ENCODE measurements at regions of chr11 and their contacts with region 1.

Region 1: GRCh38 chr11:61384271-61385242 is 7.8 kb upstream of the TMEM216 start:
- DNase-seq: no peak
- H3K4me3 ChIP-seq: no peak overlapping the region
- H3K27ac ChIP-seq: no peak overlapping the region
- H3K27me3 ChIP-seq: no peaks in the 10 kb centered on the region
- CTCF ChIP-seq: peak; percentile 40

Region 2: DNA sequence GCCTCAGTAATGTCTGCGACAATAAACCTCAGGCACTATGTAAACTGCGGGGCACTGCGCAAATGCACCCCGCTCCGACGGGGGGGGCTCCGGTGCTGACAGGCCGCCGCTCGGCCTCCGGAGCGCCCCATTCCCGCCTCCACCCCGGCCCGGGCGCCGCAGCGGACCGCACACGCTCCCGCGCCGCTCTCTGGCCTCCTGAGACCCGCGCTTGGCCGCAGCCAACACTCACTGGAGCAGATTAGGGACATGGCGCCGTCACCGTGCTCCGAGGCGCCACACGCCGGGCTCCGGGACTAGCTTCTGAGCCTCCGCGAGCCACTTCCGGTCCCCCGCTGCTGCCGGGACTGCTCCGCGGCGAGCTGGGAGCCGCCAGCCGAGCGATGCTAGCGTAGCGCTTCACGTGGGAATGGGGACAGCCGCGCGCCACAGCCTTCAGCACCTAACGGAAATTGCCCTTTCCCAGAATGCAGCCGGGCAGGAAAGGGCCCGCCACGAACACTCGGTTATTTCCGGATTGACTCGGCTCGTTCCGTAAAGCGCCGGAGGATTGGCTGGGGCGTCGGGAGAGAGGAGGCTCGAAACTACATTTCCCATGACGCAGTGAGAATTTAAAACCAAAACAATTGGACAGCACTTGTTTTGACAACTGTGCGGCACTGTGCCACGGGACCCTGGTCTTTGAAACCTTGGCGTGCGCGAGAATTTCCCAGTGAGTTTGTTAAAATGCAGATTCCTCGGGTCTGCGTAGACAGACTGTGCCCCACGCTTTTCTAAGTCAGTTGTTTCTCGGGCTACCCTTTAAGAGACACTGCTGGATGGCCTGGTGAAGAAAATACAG is 478.2 kb before region 1 on chr11 and contains the start of gene PRPF19:
- CTCF ChIA-PET with region 1: no interaction called
- POLR2A ChIA-PET with region 1: interaction called, 13 read pairs
- DNase-seq: peak; percentile 81
- H3K4me3 ChIP-seq: peak within 1 kb of the TSS; percentile 91
- H3K27ac ChIP-seq: peak within 1 kb of the TSS; percentile 85
- H3K27me3 ChIP-seq: peaks cover 5% of the 10 kb centered on the region
- CTCF ChIP-seq: no peak
- polyA plus RNA-seq, gene PRPF19: 25.1 and 33.6 TPM in 2 replicates

Region 3: DNA sequence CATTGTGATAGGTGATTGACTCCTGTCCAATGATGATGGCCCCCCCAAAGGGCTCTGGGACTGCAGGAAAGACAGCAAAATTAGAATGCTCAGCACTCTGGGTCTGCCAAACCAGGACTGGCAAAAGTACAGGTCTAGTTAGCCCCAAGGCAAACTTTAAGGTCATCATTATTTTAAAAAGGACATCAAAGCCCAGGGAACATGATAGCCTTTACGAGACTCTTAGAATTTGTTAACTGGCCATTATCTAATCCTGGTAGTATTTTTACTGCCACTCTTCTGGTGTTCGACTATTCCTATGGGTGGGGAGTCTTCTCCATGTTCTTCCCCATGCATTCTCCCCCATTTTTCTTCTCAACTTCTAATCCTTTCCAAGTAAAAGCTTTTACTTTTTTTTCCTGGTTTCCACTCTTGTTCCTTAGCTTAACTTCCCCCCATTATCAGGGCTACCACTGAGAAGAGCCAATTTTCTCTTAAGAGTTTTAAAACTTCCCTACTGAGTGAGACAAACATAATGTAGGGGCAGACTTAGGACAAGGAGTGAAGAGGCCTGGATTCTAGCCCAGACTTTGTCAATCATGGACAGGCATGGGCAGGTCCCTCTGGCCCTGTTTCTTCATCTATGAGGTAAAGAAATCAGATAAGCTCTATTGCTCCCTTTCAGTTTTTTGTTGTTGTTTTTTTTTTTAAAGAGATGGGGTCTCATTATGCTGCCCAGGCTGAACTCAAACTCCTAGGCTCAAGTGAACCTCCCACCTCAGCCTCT is 58.7 kb before region 1 on chr11:
- CTCF ChIA-PET with region 1: interaction called, 21 read pairs
- POLR2A ChIA-PET with region 1: no interaction called
- DNase-seq: no peak
- H3K4me3 ChIP-seq: no peak overlapping the region
- H3K27ac ChIP-seq: peak overlapping the region; percentile 21
- H3K27me3 ChIP-seq: no peaks in the 10 kb centered on the region
- CTCF ChIP-seq: no peak

Region 4: DNA sequence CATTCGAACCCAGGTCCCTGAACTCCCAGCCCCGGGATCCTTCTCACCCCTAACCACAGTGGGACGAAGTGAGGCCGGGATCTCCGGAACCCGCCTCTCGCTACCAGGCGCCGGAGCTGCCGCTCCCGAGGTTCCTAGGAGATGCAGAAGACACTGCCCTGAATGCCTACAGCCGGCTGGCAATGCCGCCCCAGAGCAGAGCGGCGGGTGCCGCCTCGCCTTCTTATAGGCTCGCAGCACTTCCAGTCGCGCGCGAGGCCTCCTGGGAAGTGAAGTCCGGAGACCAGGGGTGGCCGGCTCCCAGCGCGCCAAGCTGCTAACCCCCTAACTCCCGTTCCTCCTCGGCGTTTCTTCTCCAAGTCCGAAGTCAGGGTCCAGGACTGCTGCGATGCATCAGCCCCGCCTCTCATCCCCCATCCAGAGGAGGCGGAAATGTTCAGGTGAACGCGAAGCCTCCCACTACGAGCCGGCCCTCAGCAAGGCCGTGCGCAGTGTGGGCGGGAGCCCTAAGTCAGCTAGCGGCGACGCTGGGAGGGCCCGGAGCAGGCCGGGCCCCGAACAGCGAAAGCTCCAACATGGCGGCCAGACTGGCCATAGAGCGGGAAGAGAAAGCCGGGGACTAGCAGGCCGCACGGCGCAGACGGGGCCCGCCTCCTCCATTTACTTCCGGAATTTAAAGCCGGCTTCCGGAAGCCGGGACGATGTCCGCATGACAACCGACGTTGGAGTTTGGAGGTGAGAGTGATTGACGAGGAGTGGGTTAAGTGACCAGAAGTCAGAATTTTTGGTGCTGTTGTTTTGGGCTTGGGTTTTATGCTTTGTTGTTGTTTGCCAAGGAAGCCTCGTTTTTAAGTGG is 22.6 kb before region 1 on chr11 and contains the starts of genes CYB561A3 and TMEM138:
- CTCF ChIA-PET with region 1: interaction called, 26 read pairs
- POLR2A ChIA-PET with region 1: interaction called, 32 read pairs
- DNase-seq: peak; percentile 81
- H3K4me3 ChIP-seq: peak within 1 kb of the TSS; percentile 74
- H3K27ac ChIP-seq: peak within 1 kb of the TSS; percentile 100
- H3K27me3 ChIP-seq: no peaks in the 10 kb centered on the region
- CTCF ChIP-seq: no peak
- polyA plus RNA-seq, gene CYB561A3: 34.5 and 43.7 TPM in 2 replicates
- polyA plus RNA-seq, gene TMEM138: 71.7 and 79.2 TPM in 2 replicates

Region 5: GRCh38 chr11:61401558-61401957 is 17.0 kb after region 1 on chr11:
- CTCF ChIA-PET with region 1: interaction called, 15 read pairs
- POLR2A ChIA-PET with region 1: no interaction called
- DNase-seq: no peak
- H3K4me3 ChIP-seq: no peak overlapping the region
- H3K27ac ChIP-seq: no peak overlapping the region
- H3K27me3 ChIP-seq: no peaks in the 10 kb centered on the region
- CTCF ChIP-seq: no peak

Measured in AG04450 (cell line).